ENCODE measurements at regions of chr7 and their contacts with region 1.

Region 1: DNA sequence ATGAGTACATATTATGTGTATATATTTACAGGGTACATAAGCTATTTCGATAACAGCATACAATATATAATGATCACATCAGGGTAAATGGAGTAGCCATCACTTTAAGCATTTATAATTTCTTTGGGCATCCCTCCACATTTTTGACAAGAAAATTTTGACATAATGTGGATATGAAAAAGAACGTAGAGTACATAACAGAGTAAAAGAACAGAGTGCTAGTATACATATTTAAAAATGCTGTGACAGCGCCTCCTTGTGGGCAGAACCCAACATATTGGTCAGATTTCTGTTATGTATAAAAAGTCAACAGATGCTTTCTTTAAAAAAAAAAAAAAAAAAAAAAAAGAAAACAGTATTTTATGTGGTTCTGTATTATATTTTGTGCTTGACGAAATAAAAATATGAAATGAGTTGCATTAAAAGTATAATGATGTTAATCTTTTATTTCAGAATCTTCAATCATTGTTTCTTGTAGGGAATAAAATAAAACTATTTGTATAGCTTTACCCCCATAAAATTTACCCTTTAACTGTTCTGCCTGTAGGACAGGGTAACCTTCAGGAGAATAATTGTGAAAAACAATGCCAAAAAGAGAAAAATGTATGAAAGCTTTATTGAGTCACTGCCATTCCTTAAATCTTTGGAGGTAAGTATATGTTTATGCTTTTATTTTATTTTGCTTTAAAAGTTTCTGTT is 18.3 kb upstream of the HBP1 start:
- DNase-seq: peak; percentile 63
- H3K4me3 ChIP-seq: no peak overlapping the region
- H3K27ac ChIP-seq: no peak overlapping the region
- H3K27me3 ChIP-seq: no peaks in the 10 kb centered on the region
- CTCF ChIP-seq: peak; percentile 61

Region 2: DNA sequence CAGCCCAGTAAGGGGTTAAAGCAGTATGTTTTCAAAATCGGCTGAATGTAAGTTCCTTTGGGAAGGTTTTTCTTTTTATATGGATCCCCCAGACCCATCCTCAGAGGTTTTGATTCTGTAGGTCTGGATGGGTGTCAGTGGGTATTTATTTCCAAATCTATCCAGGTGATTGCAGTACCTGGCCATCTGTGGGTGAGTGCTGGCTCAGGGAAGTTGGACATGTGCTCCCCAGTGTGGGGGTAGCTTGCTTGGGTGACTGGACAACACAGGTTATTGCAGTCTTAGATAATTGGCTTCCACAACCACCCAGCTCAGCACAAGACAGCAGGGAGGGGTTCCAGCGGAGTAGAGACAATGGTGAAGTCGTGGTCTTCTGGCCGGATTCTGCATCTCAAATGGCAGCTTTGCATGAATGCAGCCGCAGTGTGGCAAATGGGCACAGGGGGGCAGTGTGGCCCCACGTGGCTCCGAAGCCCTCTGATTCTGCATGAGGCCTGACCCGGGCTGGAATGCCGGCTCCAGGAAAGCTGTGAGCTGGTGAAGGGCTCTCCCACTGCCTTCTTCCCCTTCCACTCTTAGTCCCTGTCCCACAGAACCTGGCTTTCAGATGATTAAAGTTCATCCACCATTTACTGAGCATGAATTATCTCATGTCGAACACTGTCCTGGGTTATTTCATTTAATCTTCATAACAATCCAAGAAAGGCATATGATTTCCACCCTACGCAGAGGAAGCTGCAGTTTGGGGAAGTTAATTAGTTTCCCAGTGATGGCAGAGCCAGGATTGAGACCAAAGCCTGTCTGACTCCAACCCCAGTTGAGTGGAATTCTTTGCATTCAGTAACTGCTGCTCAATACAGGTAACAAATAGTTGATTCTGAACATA is 973.9 kb before region 1 on chr7:
- CTCF ChIA-PET with region 1: interaction called, 15 read pairs
- POLR2A ChIA-PET with region 1: no interaction called
- DNase-seq: peak; percentile 46
- H3K4me3 ChIP-seq: no peak overlapping the region
- H3K27ac ChIP-seq: no peak overlapping the region
- H3K27me3 ChIP-seq: peaks cover 4% of the 10 kb centered on the region
- CTCF ChIP-seq: peak; percentile 96

Region 3: DNA sequence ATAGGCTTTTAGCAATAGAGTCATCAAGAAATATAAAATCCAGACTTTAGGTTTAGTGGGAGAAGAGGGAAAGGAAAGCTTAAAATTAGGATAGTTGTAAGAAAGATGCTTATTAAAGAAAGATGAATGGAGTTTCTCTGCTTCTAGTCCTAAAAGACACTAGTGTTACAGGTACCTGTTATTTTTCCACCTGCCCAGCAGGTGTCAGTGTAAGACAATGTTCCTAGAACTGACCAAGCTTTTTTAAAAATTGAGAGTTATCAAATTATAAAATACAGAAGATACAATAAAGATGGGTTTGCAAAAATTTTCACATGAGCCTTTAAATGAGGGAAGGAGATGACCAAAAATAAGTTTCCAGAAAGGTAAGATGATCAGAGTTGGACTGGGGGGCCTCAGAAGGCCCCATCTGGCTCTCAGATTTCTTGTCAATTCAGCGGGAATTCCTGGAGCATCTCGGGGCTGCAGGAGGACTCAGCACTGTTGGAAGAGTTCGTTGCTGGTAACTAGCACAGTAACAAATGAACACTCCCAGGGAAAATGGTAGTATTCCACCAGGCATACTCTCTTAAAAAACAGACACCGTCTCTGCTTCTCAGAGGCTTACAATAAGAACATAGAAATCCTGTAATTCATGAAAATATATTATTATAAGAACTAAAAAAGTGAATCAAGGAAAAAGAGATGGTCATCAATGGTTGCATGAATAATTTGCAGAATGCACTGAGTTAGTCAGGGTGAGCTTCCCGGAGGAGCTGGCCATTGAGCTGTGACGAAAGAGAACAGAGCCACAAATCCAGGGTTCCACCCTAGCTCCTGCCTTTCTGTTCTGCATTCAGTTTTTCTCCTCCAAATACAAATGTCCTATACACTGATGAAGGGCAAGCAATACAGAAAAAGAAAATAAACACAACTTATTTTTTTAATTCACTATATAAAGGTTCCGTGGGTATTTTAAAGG is 357.2 kb before region 1 on chr7:
- CTCF ChIA-PET with region 1: interaction called, 13 read pairs
- POLR2A ChIA-PET with region 1: no interaction called
- DNase-seq: no peak
- H3K4me3 ChIP-seq: no peak overlapping the region
- H3K27ac ChIP-seq: no peak overlapping the region
- H3K27me3 ChIP-seq: no peaks in the 10 kb centered on the region
- CTCF ChIP-seq: peak; percentile 50

Region 4: DNA sequence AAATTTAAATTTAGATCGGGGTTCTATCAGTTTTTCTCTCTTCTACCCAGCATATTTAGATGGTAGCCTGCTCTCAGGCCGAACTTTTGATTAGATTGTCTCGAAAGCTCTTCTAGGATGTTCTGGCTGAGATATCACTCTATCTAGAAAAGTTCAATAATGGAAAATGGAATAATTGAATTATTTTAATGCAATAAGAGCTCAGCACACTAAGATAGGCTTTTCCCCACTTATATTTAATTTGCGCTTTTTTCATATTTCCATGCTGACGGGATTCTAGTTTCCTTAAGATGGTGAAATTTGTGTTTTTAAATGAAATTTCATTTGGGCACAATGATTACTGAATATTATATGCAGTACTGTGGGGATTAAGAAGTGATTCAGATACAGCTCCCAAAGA is 211.7 kb before region 1 on chr7:
- CTCF ChIA-PET with region 1: interaction called, 271 read pairs
- POLR2A ChIA-PET with region 1: no interaction called
- DNase-seq: no peak
- H3K4me3 ChIP-seq: no peak overlapping the region
- H3K27ac ChIP-seq: no peak overlapping the region
- H3K27me3 ChIP-seq: no peaks in the 10 kb centered on the region
- CTCF ChIP-seq: no peak

Region 5: DNA sequence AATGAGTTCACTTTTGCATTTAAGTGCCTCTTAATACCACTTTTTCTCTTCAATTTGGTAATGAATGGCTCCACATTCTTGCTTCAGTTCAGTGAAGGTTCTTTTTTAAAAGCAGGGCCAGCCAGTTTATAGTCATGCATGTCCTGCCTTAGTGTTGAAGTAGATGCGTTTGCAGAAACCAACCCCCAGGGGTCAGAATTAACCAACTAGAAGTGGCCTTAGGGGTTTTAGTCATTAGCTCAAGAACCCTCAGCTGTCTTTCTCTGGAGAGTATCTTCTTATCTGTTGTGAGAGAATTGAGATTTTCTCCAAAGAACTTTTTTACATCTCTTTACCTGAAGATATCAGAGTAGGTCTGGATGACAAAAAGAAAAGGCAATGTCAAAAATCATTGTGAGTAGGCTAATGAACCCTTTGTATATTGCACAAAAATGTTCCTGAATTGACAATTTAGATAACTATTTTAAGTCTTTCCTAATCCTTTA is 203.2 kb before region 1 on chr7:
- CTCF ChIA-PET with region 1: interaction called, 271 read pairs
- POLR2A ChIA-PET with region 1: no interaction called
- DNase-seq: peak; percentile 69
- H3K4me3 ChIP-seq: no peak overlapping the region
- H3K27ac ChIP-seq: no peak overlapping the region
- H3K27me3 ChIP-seq: peaks cover 5% of the 10 kb centered on the region
- CTCF ChIP-seq: peak; percentile 85

Region 6: GRCh38 chr7:106994833-106995232 is 155.7 kb before region 1 on chr7:
- CTCF ChIA-PET with region 1: no interaction called
- POLR2A ChIA-PET with region 1: no interaction called
- DNase-seq: no peak
- H3K4me3 ChIP-seq: no peak overlapping the region
- H3K27ac ChIP-seq: no peak overlapping the region
- H3K27me3 ChIP-seq: no peaks in the 10 kb centered on the region
- CTCF ChIP-seq: no peak

Region 7: DNA sequence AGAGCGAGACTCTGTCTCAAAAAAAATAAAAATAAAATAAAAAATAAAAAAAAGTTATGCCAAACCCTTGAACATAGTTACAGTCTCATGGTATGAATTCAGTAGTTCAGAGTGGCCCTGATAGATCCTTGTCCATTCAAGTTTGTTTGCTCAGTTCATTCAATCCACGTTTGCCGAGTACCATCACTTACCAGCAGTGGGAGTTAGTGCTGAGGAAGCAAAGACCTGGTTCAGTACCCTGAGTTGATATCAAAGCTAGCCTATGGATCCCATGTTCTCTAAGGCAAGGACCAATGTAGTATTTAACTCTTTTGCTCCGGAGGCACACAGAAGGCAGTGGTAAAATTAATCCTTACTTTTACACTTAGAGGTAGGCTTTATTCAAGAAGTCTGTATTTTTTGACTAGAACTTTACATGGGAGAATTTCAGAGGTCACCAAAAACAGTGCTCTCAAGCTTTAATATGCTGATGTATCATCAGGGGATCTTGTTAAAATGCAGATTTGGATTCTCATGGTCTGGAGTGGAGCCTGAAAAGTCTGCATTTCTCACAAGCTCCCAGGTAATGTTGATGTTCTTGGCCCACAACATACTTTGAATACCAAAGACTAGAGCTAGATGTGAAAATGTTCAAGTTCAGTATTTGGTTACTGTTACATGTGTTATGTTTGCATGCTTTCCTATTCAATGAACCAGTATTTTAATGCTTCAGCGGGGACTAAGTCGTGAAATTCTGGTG is 19.9 kb before region 1 on chr7:
- CTCF ChIA-PET with region 1: interaction called, 38 read pairs
- POLR2A ChIA-PET with region 1: no interaction called
- DNase-seq: no peak
- H3K4me3 ChIP-seq: no peak overlapping the region
- H3K27ac ChIP-seq: no peak overlapping the region
- H3K27me3 ChIP-seq: no peaks in the 10 kb centered on the region
- CTCF ChIP-seq: peak; percentile 17

Region 8: DNA sequence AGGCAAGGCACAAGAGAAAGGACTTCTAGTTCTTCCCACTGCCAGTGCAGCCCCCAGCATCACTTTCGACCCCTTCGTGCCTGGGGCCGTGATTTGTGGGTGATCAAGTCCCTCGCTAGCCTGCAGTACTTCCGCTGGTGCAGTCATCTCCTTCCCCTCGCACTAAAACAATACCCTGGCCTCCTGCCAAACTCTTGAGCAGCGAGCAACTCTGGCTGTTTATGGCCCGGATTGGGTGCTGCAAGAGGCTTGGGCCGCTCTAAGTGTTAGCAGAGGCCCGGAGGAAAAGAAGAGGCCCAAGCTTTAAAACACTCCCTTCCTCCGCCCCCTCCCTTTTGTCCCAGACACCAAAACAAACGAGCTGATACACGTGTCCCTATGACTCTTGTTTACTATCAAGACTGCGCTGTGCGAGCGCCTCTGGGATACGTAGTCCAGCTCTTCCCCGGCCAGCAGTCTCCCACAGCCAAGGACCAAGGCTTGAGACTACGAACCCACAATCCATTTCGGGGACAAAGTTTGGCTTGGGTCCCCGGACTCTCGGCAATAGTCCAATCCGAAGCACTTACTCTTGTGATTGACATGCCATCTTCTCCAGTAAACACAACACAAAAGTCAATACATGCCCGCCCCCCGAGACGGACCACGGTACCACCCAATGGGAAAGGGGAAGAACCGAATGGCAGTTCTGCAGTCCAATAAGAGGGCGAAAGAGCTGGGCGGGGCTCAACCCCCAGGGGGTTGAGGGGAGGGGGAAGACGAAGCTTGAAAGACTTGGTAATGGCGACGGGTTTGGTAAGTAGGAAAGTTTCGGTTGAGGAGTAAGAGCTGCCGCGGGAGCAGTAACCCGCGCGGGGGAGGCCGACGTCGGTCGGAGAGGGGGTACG is 18.0 kb after region 1 on chr7 and contains the start of gene HBP1:
- CTCF ChIA-PET with region 1: interaction called, 26 read pairs
- POLR2A ChIA-PET with region 1: interaction called, 3 read pairs
- DNase-seq: peak; percentile 100
- H3K4me3 ChIP-seq: peak within 1 kb of the TSS; percentile 83
- H3K27ac ChIP-seq: peak within 1 kb of the TSS; percentile 99
- H3K27me3 ChIP-seq: no peaks in the 10 kb centered on the region
- CTCF ChIP-seq: no peak
- polyA plus RNA-seq, gene HBP1: 72.7 and 85.2 TPM in 2 replicates

Region 9: DNA sequence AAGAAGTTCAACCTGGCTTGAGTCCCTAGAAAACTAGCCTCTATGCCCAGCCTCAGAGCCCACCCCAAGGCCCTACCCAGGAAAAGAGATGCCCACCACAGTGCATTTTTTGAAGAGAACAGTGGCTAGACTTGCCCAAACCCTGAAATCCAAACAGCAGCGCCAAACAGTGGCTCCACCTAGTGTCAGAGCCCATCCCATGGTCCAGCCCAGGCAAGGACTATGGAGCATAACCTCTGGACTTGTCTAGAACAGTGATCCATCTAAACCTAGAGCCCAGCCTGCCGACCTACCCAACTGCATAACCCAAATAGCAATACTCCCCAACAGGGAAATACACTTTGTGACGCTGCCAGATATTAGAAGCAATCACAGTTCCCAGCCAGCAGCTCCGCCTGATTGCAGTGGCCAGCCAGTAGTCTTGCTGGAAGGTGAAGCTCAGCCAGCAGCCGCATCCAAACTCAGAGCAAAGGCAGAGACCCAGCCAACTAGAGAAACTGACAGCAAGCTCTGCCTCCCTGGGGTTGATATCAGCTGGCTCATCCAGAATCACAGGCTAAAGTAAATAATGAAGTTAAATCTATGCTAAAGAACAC is 62.8 kb after region 1 on chr7:
- CTCF ChIA-PET with region 1: no interaction called
- POLR2A ChIA-PET with region 1: no interaction called
- DNase-seq: no peak
- H3K4me3 ChIP-seq: no peak overlapping the region
- H3K27ac ChIP-seq: no peak overlapping the region
- H3K27me3 ChIP-seq: no peaks in the 10 kb centered on the region
- CTCF ChIP-seq: no peak

Region 10: DNA sequence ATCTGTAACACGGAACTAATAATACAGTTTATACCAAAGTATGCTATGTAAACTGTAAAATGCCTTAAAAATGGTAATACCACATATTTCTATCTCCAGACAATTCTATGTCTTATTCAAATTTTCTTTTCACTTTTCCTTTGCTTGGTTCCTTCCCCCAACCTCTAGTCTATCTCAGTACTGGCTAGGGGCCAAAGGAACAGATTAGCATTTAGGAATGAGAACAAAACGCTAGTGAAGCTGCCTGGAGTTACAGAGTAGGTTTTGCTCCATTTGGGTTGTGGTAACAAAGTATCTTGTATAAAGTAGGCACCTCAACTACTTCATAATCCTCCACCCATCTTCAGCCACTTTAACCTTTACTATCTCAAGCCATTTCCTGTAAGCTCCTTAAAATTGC is 112.3 kb after region 1 on chr7:
- CTCF ChIA-PET with region 1: no interaction called
- POLR2A ChIA-PET with region 1: no interaction called
- DNase-seq: no peak
- H3K4me3 ChIP-seq: no peak overlapping the region
- H3K27ac ChIP-seq: no peak overlapping the region
- H3K27me3 ChIP-seq: no peaks in the 10 kb centered on the region
- CTCF ChIP-seq: no peak

Region 11: DNA sequence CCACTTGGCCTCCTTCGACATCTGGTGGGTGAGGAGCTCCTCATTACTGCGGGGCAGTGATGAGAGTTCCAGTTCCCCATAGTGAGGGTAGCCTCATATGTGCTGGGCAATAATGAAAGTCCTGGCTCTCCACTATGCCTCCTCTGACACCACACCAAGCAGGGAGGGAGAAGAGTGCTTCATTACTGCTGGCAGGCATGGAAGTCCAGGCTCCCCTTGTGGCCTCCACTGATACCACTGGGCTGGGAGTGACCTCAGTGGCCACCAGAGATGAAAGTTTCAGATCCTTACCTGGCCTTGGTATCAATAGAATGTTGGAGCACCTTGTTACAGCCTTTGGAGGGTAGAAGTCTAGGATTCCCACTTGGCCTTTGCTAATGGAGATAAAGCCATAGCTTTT is 419.8 kb after region 1 on chr7:
- CTCF ChIA-PET with region 1: no interaction called
- POLR2A ChIA-PET with region 1: no interaction called
- DNase-seq: no peak
- H3K4me3 ChIP-seq: no peak overlapping the region
- H3K27ac ChIP-seq: no peak overlapping the region
- H3K27me3 ChIP-seq: no peaks in the 10 kb centered on the region
- CTCF ChIP-seq: no peak